ENCODE measurements at regions of chr4 and their contacts with region 1.

Region 1: DNA sequence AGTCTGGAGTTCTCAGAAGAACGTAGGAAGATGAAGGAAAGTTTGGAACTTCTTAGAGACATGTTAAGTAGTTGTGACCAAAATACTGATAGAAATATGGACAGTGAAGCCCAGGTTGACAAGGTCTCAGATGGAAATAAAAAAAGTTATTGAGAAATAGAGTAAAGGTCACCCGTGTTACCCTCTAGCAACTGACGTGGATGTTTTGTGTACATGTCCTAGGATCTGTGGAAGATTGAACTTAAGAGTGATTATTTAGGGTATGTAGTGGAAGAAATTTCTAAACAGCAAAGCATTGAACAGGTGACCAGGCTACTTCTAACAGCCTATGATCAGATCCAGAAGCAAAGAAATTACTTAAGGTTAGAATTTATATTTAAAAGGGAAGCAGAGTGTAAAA is 1020.4 kb downstream of the FSTL5 start:
- DNase-seq: no peak

Region 2: DNA sequence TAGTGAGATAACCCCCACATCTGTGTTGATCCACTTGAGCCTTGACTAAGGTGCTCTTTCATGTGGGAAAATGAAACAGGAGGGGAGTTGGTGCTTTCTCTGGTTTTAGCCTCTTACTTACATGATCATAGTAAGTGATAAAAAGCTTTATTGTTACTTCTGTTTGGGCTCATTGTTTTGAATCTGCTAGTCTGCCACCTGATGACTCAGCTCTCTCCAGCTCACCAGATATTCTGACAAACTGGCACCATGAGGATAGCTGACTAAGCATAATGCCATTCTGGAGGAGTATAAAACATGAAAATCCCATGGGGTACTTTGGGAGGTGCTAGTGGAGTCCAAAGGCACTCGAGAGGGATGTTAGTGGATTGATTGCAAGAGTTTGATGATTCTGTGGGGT is 1216.5 kb before region 1 on chr4:
- intact Hi-C with region 1: no loop called
- DNase-seq: no peak

Region 3: GRCh38 chr4:161160718-161161117 is 17.3 kb after region 1 on chr4:
- intact Hi-C with region 1: loop called in 1 of 2 experiments (anchors 1 kb)
- DNase-seq: no peak

Measured in posterior vena cava (tissue), 2 donors.